Ovary (tissue), 10 donors: ENCODE measurements at regions of chr2 and their contacts with region 1.

Region 1: DNA sequence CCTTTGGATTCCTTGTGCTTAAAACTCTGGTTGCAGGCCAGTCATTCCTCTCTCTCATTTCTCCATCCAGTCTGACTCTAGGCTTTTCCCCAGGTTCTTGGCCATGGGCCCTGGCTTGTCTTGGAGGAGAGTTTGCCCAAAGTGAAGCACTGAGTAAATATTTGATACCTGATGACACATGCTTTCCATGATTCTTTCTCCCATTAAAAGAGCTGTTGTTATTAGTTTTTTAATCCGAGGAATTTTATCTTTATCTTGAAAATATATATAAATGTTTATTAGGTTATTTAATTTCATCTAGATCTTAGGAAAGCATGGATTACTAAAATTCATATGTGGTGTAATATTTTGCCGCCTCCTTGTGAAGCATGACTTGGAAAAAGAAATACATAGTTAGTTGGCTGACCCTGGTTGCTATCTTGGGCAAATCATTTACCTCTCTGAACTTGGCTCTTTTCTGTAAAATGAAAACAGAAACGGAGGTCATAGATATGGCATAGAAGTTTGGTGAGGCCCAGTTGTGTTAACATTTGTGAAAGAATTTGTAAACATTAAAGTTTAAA is 650.1 kb downstream of the SLC4A3 start:
- DNase-seq: peak; percentile 27 to 53 (median 37)
- H3K4me3 ChIP-seq: no peak overlapping the region
- H3K27ac ChIP-seq: no peak overlapping the region
- H3K4me1 ChIP-seq: peaks cover 2% of the 10 kb centered on the region
- H3K27me3 ChIP-seq: no peaks in the 10 kb centered on the region
- CTCF ChIP-seq: no peak
- EP300 ChIP-seq: no peak
- POLR2A ChIP-seq: no peak

Region 2: GRCh38 chr2:218607436-218608115 is 1670.0 kb before region 1 on chr2 and contains the start of gene PLCD4:
- intact Hi-C with region 1: loop called in 1 of 4 experiments (anchors 5 kb)
- DNase-seq: peak in 1 of 5 donors; percentile 14
- H3K4me3 ChIP-seq: no peak within 1 kb of the TSS
- H3K27ac ChIP-seq: no peak within 1 kb of the TSS
- H3K4me1 ChIP-seq: no peaks in the 10 kb centered on the region
- H3K27me3 ChIP-seq: no peaks in the 10 kb centered on the region
- CTCF ChIP-seq: no peak
- EP300 ChIP-seq: no peak
- POLR2A ChIP-seq: no peak
- total RNA-seq, gene PLCD4: 0.24 to 1.5 (median 0.91) TPM

Region 3: DNA sequence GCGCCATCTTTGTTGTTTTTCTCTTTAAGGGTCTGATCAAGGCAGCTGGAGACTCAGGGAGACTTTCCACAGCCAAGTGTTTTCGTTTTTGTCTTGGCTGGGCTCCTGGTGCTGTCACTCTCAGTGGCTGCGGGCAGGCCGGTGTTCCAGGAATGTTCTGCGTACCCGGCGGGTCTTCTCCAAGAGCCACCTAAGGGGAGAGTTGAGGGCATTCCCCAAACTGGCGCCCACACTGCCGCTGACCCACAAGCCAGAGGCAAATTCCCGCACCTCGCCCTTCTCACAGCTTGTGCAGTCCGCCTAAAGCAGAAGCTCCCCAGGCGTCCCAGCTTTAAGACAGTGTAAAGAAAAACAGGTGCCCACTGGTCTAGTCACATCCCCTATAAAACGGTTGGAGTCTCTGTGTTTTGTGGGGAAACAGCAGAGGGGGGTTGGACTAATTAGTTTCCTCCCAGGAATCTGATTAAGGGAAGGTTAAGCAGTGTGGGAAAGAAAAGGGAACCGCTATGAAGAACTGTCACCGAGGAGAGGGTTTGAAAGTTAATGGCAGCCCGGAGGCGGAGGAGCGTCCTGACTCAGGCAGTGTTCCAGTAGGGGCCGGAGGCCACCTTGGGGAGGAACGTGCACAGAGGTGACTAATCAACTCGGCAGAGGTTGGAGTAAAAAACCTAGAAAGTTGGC is 425.6 kb before region 1 on chr2:
- intact Hi-C with region 1: no loop called
- DNase-seq: peak; percentile 55 to 67 (median 57)
- H3K4me3 ChIP-seq: peak overlapping the region; percentile 22
- H3K27ac ChIP-seq: peak overlapping the region in 1 of 2 donors; percentile 17
- H3K4me1 ChIP-seq: peaks cover 2% of the 10 kb centered on the region
- H3K27me3 ChIP-seq: no peaks in the 10 kb centered on the region
- CTCF ChIP-seq: no peak
- EP300 ChIP-seq: no peak
- POLR2A ChIP-seq: no peak

Region 4: GRCh38 chr2:220215785-220216184 is 61.7 kb before region 1 on chr2:
- intact Hi-C with region 1: no loop called
- DNase-seq: no peak
- H3K4me3 ChIP-seq: no peak overlapping the region
- H3K27ac ChIP-seq: no peak overlapping the region
- H3K4me1 ChIP-seq: no peaks in the 10 kb centered on the region
- H3K27me3 ChIP-seq: no peaks in the 10 kb centered on the region
- CTCF ChIP-seq: no peak
- EP300 ChIP-seq: no peak
- POLR2A ChIP-seq: no peak